ENCODE measurements at regions of chr3 and their contacts with region 1.

Region 1: DNA sequence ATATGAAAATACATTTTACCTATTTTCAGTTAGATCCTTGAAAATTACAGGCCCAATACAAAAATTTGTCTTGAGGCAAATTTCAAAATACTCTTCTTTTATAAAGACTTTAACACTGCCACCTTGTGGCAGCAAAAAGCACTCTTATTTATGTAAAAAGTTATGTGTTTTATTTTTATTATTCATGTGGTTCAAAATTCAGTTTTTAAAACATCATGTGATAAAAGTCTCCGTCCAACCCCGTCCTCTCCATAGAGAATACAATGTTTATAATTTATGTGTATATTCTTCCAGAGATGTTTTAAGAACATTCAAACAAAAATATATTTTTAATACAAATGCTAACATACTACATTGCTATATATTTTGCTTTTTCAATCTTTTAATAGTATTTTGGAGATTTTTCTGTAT is 36.9 kb upstream of the TRIM59 start:
- DNase-seq: peak; percentile 15
- ATAC-seq: no peak
- H3K4me3 ChIP-seq: peak overlapping the region in 2 of 3 experiments; percentile 57 to 65; a peak in 3 of 6 replicates
- H3K27ac ChIP-seq: no peak overlapping the region
- H3K4me1 ChIP-seq: peaks cover 6% of the 10 kb centered on the region; the same call in 1 of the 2 replicates
- H3K27me3 ChIP-seq: no peaks in the 10 kb centered on the region
- CTCF ChIP-seq: peak; percentile 37
- EP300 ChIP-seq: no peak
- POLR2A ChIP-seq: no peak
- RAD21 ChIP-seq: no peak

Region 2: GRCh38 chr3:159988617-159989271 is 497.7 kb before region 1 on chr3 and contains the start of gene IL12A:
- CTCF ChIA-PET with region 1: no interaction called
- POLR2A ChIA-PET with region 1: no interaction called
- in situ Hi-C with region 1: no loop called
- intact Hi-C with region 1: no loop called
- DNase-seq: peak; percentile 59
- ATAC-seq: peak; percentile 98
- H3K4me3 ChIP-seq: peak within 1 kb of the TSS; percentile 63 to 71 (median 68)
- H3K27ac ChIP-seq: no peak within 1 kb of the TSS
- H3K4me1 ChIP-seq: peaks cover 20% of the 10 kb centered on the region
- H3K27me3 ChIP-seq: no peaks in the 10 kb centered on the region
- CTCF ChIP-seq: peak; percentile 95
- EP300 ChIP-seq: no peak
- POLR2A ChIP-seq: 0 out of 4 replicates have a peak, but pooled peaks of 1 of the 2 experiments have one; percentile 24
- RAD21 ChIP-seq: peak; percentile 69
- total RNA-seq, gene IL12A: 0.74 and 1.1 TPM in 2 replicates

Region 3: GRCh38 chr3:160038862-160039562 is 447.5 kb before region 1 on chr3:
- CTCF ChIA-PET with region 1: no interaction called
- POLR2A ChIA-PET with region 1: no interaction called
- in situ Hi-C with region 1: no loop called
- intact Hi-C with region 1: loop called (anchors 10 kb)
- DNase-seq: no peak
- ATAC-seq: peak; percentile 79
- H3K4me3 ChIP-seq: peak overlapping the region in 2 of 3 experiments; percentile 26 to 59; a peak in 3 of 6 replicates
- H3K27ac ChIP-seq: no peak overlapping the region
- H3K4me1 ChIP-seq: peaks cover 7% of the 10 kb centered on the region; the same call in 1 of the 2 replicates
- H3K27me3 ChIP-seq: peaks cover 3 to 22% of the 10 kb centered on the region in 2 experiments; a peak in 3 of 5 replicates
- CTCF ChIP-seq: 0 out of 2 replicates have a peak, but pooled peaks have one; percentile 10
- EP300 ChIP-seq: no peak
- POLR2A ChIP-seq: no peak
- RAD21 ChIP-seq: no peak

Region 4: DNA sequence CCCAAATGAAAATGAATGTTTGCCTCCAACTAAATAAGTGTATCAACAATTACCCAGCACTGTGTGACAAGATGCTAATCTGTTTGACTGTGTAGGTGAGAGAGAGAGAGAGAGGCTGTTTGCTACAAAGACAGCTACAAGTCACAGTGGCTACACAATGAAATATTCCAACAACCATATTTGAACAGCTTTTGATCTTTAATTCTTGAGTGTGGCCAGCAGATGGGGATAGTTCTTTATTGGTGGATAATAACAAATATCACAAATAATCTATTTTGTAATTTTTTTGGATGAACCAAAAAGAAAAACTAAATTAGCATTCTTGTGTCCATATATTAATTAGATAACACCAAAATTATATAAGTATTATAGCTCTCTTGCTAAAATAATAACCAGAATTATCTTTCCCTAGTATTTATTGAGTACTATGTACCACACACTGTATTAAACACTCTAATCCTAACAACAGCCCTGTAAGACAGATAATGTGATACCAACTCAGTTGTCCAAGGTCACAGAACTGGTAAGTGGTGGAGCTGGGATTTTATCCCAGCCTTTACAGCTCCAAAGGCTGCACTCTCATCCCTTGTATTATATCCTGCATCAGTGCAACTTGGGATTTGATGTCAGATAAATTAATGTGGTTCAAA is 323.1 kb before region 1 on chr3:
- CTCF ChIA-PET with region 1: interaction called, 3 read pairs
- POLR2A ChIA-PET with region 1: no interaction called
- in situ Hi-C with region 1: loop called (anchors 5 kb)
- intact Hi-C with region 1: loop called (anchors 5 kb)
- DNase-seq: peak; percentile 4
- ATAC-seq: peak; percentile 48
- H3K4me3 ChIP-seq: no peak overlapping the region
- H3K27ac ChIP-seq: no peak overlapping the region
- H3K4me1 ChIP-seq: no peaks in the 10 kb centered on the region
- H3K27me3 ChIP-seq: no peaks in the 10 kb centered on the region; a peak in 2 of 5 replicates
- CTCF ChIP-seq: peak; percentile 45
- EP300 ChIP-seq: no peak
- POLR2A ChIP-seq: no peak
- RAD21 ChIP-seq: no peak

Region 5: GRCh38 chr3:160544844-160545503 is 58.5 kb after region 1 on chr3:
- CTCF ChIA-PET with region 1: no interaction called
- POLR2A ChIA-PET with region 1: no interaction called
- in situ Hi-C with region 1: no loop called
- intact Hi-C with region 1: no loop called
- DNase-seq: no peak
- ATAC-seq: no peak
- H3K4me3 ChIP-seq: no peak overlapping the region
- H3K27ac ChIP-seq: no peak overlapping the region
- H3K4me1 ChIP-seq: no peaks in the 10 kb centered on the region
- H3K27me3 ChIP-seq: no peaks in the 10 kb centered on the region
- CTCF ChIP-seq: no peak
- EP300 ChIP-seq: no peak
- POLR2A ChIP-seq: no peak
- RAD21 ChIP-seq: no peak

Region 6: DNA sequence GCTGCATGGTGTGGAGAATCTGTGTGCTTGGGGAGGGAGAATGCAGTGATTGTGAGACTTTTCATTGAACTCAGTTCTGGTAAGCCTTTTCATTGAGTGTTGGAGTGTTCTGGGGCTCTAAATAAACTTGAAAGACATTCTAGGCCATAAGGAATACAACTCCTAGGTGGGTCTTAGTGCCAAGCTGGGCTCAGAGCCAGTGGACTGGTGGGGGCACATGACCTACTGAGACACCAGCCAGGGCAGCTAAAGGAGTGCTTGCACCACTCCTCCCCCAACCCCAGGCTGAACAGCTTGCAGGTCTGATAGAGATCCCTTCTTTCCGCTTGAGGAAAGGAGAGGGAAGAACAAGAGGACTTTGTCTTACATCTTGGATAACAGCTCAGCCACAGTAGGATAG is 100.6 kb after region 1 on chr3:
- CTCF ChIA-PET with region 1: no interaction called
- POLR2A ChIA-PET with region 1: no interaction called
- in situ Hi-C with region 1: no loop called
- intact Hi-C with region 1: no loop called
- DNase-seq: no peak
- ATAC-seq: no peak
- H3K4me3 ChIP-seq: no peak overlapping the region
- H3K27ac ChIP-seq: no peak overlapping the region
- H3K4me1 ChIP-seq: no peaks in the 10 kb centered on the region
- H3K27me3 ChIP-seq: no peaks in the 10 kb centered on the region
- CTCF ChIP-seq: no peak
- EP300 ChIP-seq: no peak
- POLR2A ChIP-seq: no peak
- RAD21 ChIP-seq: no peak

Measured in HepG2 (cell line).